CD4-positive, alpha-beta memory T cell (primary cell): ENCODE measurements at regions of chr2 and their contacts with region 1.

Region 1: DNA sequence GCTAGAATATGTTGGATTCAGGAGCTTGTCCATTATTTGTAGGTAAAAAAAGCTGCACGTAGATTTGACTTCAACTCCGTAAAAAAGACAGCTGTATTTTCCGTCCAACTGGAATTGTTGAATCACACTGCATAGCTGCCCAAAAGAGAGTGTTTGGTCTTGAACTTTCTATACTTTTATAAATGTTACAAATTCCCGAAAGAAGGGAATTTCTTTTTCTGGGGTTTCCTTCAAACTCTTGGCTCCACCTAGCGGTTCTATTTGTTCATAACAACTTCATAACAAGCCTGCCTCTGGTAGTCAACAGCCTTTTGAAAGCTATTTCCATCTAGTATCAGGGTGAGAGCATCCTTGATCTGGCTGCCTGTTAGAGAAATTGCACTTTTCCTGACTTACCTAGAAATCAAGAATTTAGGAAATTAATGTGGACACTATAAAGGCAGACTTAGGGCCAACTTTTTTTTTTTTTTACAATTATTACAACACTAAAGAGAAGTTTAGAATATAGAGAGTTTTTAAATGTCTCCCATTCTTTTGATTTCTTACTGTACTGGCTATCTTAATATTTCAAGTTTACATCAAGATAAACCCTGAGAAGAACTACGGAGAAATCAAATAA is 48.1 kb downstream of the TMEM185B start:
- DNase-seq: peak; percentile 45 to 55 (median 50)
- H3K4me3 ChIP-seq: no peak overlapping the region
- H3K4me3 Mint-ChIP-seq: peak overlapping the region in 3 of 8 donors; percentile 4 to 69 (median 11)
- H3K27ac ChIP-seq: no peak overlapping the region
- H3K27ac Mint-ChIP-seq: peak overlapping the region in 6 of 7 donors; percentile 17 to 95 (median 58)
- H3K4me1 ChIP-seq: peaks cover 48% of the 10 kb centered on the region
- H3K4me1 Mint-ChIP-seq: peaks cover 23 to 51% (median 38%) of the 10 kb centered on the region in 4 donors
- H3K27me3 ChIP-seq: no peaks in the 10 kb centered on the region
- H3K27me3 Mint-ChIP-seq: no peaks in the 10 kb centered on the region

Region 2: GRCh38 chr2:119586085-119586484 is 589.0 kb before region 1 on chr2:
- CTCF ChIA-PET with region 1: no interaction called
- POLR2A ChIA-PET with region 1: no interaction called
- intact Hi-C with region 1: no loop called
- DNase-seq: no peak
- H3K4me3 ChIP-seq: no peak overlapping the region
- H3K4me3 Mint-ChIP-seq: no peak overlapping the region
- H3K27ac ChIP-seq: no peak overlapping the region
- H3K27ac Mint-ChIP-seq: no peak overlapping the region
- H3K4me1 ChIP-seq: no peaks in the 10 kb centered on the region
- H3K4me1 Mint-ChIP-seq: no peaks in the 10 kb centered on the region
- H3K27me3 ChIP-seq: no peaks in the 10 kb centered on the region
- H3K27me3 Mint-ChIP-seq: peaks cover 2 to 8% of the 10 kb centered on the region in 2 donors

Region 3: GRCh38 chr2:119641562-119642258 is 533.4 kb before region 1 on chr2:
- CTCF ChIA-PET with region 1: interaction called, 29 read pairs
- POLR2A ChIA-PET with region 1: interaction called, 4 read pairs
- intact Hi-C with region 1: no loop called
- DNase-seq: peak; percentile 56 to 62 (median 60)
- H3K4me3 ChIP-seq: no peak overlapping the region
- H3K4me3 Mint-ChIP-seq: no peak overlapping the region
- H3K27ac ChIP-seq: no peak overlapping the region
- H3K27ac Mint-ChIP-seq: peak overlapping the region in 1 of 7 donors; percentile 37
- H3K4me1 ChIP-seq: no peaks in the 10 kb centered on the region
- H3K4me1 Mint-ChIP-seq: peaks cover 0 to 7% (median 3%) of the 10 kb centered on the region in 4 donors
- H3K27me3 ChIP-seq: no peaks in the 10 kb centered on the region
- H3K27me3 Mint-ChIP-seq: peaks cover 0 to 13% of the 10 kb centered on the region in 2 donors

Region 4: DNA sequence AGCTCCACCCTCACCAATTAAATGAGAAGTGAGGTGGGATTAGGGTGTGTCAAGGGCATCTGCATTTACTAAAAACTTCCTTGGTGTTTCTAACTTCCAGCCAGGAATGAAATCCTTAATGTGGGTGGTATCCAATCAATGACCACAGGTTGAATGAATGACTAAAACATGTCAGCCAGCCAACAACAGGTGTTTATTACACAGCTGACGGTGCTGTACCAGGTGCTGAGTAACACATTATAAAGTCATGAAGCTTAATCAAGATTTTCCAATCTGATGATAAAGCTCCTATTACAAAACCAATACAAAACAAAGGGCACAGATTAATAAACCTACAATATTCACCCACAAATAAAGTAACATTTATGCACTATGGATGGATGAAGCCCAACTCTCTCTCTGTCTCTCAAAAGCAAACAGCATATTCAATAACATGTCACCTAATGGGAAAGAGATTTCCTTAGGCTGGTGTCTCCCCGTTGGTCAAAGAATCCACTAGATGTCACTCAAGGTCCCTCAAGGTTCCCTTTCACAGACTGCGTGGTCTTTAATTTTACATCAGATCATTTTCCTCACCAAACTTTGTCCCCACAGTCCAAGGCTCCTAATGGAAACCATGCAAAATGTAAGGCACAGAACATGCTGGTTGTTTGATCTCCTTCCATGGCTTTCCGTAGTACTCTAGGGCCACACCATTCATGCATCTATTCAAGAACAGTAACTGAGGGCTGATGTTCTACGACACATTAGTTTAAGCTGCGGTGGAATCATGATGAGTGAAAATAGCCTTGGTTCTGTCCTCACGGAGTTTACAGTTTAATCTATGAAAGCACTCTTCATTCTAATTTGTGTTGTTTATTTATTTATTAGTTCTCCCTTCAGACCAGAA is 421.8 kb before region 1 on chr2:
- CTCF ChIA-PET with region 1: interaction called, 150 read pairs
- POLR2A ChIA-PET with region 1: interaction called, 16 read pairs
- intact Hi-C with region 1: loop called (anchors 1 kb)
- DNase-seq: peak in 4 of 5 donors; percentile 47 to 58 (median 56)
- H3K4me3 ChIP-seq: no peak overlapping the region
- H3K4me3 Mint-ChIP-seq: no peak overlapping the region
- H3K27ac ChIP-seq: no peak overlapping the region
- H3K27ac Mint-ChIP-seq: no peak overlapping the region
- H3K4me1 ChIP-seq: no peaks in the 10 kb centered on the region
- H3K4me1 Mint-ChIP-seq: peaks cover under 1 to 5% (median 4%) of the 10 kb centered on the region in 4 donors
- H3K27me3 ChIP-seq: no peaks in the 10 kb centered on the region
- H3K27me3 Mint-ChIP-seq: no peaks in the 10 kb centered on the region

Region 5: GRCh38 chr2:119929537-119929936 is 245.5 kb before region 1 on chr2:
- CTCF ChIA-PET with region 1: interaction called, 7 read pairs
- POLR2A ChIA-PET with region 1: interaction called, 20 read pairs
- intact Hi-C with region 1: loop called (anchors 10 kb)
- DNase-seq: peak; percentile 50 to 67 (median 58)
- H3K4me3 ChIP-seq: peak overlapping the region; percentile 39 to 51
- H3K4me3 Mint-ChIP-seq: peak overlapping the region; percentile 68 to 91 (median 90)
- H3K27ac ChIP-seq: peak overlapping the region; percentile 61
- H3K27ac Mint-ChIP-seq: peak overlapping the region; percentile 82 to 98 (median 92)
- H3K4me1 ChIP-seq: peaks cover 79% of the 10 kb centered on the region
- H3K4me1 Mint-ChIP-seq: peaks cover 46 to 81% (median 58%) of the 10 kb centered on the region in 4 donors
- H3K27me3 ChIP-seq: no peaks in the 10 kb centered on the region
- H3K27me3 Mint-ChIP-seq: no peaks in the 10 kb centered on the region

Region 6: GRCh38 chr2:120109186-120110061 is 65.6 kb before region 1 on chr2:
- CTCF ChIA-PET with region 1: interaction called, 120 read pairs
- POLR2A ChIA-PET with region 1: interaction called, 35 read pairs
- intact Hi-C with region 1: loop called (anchors 1 kb)
- DNase-seq: peak in 4 of 5 donors; percentile 49 to 64 (median 56)
- H3K4me3 ChIP-seq: peak overlapping the region in 1 of 2 donors; percentile 25
- H3K4me3 Mint-ChIP-seq: peak overlapping the region; percentile 49 to 89 (median 80)
- H3K27ac ChIP-seq: peak overlapping the region; percentile 23
- H3K27ac Mint-ChIP-seq: peak overlapping the region in 6 of 7 donors; percentile 45 to 91 (median 64)
- H3K4me1 ChIP-seq: peaks cover 23% of the 10 kb centered on the region
- H3K4me1 Mint-ChIP-seq: peaks cover 18 to 24% (median 21%) of the 10 kb centered on the region in 4 donors
- H3K27me3 ChIP-seq: no peaks in the 10 kb centered on the region
- H3K27me3 Mint-ChIP-seq: peaks cover 0 to 1% of the 10 kb centered on the region in 2 donors

Region 7: GRCh38 chr2:120252225-120253021 is 77.4 kb after region 1 on chr2 and contains the start of gene RALB:
- CTCF ChIA-PET with region 1: interaction called, 13 read pairs
- POLR2A ChIA-PET with region 1: interaction called, 42 read pairs
- intact Hi-C with region 1: loop called (anchors 1 kb)
- DNase-seq: peak; percentile 97 to 99 (median 97)
- H3K4me3 ChIP-seq: peak within 1 kb of the TSS; percentile 78 to 80
- H3K4me3 Mint-ChIP-seq: peak within 1 kb of the TSS; percentile 99 to 100 (median 100)
- H3K27ac ChIP-seq: peak within 1 kb of the TSS; percentile 61
- H3K27ac Mint-ChIP-seq: peak within 1 kb of the TSS; percentile 87 to 99 (median 98)
- H3K4me1 ChIP-seq: peaks cover 44% of the 10 kb centered on the region
- H3K4me1 Mint-ChIP-seq: peaks cover 37 to 51% (median 43%) of the 10 kb centered on the region in 4 donors
- H3K27me3 ChIP-seq: no peaks in the 10 kb centered on the region
- H3K27me3 Mint-ChIP-seq: peaks cover 1 to 3% of the 10 kb centered on the region in 2 donors
- total RNA-seq, gene RALB: 14.0 TPM

Region 8: DNA sequence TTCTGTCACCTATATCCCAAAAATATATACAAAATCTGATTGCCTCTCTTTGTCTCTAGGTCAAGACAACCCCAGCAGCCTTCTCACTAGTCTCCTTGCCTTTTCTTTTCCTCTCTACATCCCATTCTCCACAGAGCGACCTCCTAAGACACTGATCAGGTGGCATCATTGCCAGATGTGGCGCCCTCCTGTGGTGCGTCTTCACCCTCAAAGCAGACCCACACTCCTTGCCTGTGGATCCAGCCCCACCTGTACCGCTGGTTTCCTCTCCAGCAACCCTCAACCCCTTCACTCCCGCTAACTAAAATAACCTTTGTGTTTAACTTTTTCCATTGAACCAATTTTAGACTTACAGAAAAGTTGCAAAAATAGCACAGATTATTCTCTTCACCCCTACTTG is 833.9 kb after region 1 on chr2:
- CTCF ChIA-PET with region 1: no interaction called
- POLR2A ChIA-PET with region 1: no interaction called
- intact Hi-C with region 1: no loop called
- DNase-seq: no peak
- H3K4me3 ChIP-seq: no peak overlapping the region
- H3K4me3 Mint-ChIP-seq: no peak overlapping the region
- H3K27ac ChIP-seq: no peak overlapping the region
- H3K27ac Mint-ChIP-seq: no peak overlapping the region
- H3K4me1 ChIP-seq: no peaks in the 10 kb centered on the region
- H3K4me1 Mint-ChIP-seq: no peaks in the 10 kb centered on the region
- H3K27me3 ChIP-seq: no peaks in the 10 kb centered on the region
- H3K27me3 Mint-ChIP-seq: peaks cover 1 to 3% of the 10 kb centered on the region in 2 donors

Region 9: DNA sequence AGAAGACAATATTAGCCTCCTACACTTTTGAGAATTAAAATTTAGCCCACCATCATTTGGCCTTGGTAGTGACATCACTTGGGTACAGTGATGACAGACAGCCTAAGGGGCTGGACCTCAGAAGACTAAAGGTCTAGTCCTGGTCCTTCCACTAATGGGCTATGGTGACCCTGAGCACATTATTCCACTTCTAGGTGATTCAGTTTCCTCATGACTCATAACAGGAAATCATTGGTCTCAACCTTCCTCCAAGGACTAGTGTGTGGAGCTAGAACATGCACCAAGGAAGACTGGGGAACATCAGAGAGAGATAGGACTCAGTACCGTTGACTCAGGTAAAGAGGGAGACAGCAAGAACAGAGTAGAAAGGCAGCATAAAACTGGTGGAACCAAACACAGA is 1045.9 kb after region 1 on chr2:
- CTCF ChIA-PET with region 1: no interaction called
- POLR2A ChIA-PET with region 1: no interaction called
- intact Hi-C with region 1: no loop called
- DNase-seq: no peak
- H3K4me3 ChIP-seq: no peak overlapping the region
- H3K4me3 Mint-ChIP-seq: no peak overlapping the region
- H3K27ac ChIP-seq: no peak overlapping the region
- H3K27ac Mint-ChIP-seq: no peak overlapping the region
- H3K4me1 ChIP-seq: no peaks in the 10 kb centered on the region
- H3K4me1 Mint-ChIP-seq: no peaks in the 10 kb centered on the region
- H3K27me3 ChIP-seq: no peaks in the 10 kb centered on the region
- H3K27me3 Mint-ChIP-seq: peaks cover 0 to 1% of the 10 kb centered on the region in 2 donors